ENCODE measurements at regions of chr17 and their contacts with region 1.

Region 1: GRCh38 chr17:45104907-45105574 is 27.3 kb downstream of the PLCD3 start:
- DNase-seq: no peak
- H3K4me3 ChIP-seq: no peak overlapping the region
- H3K27ac ChIP-seq: no peak overlapping the region
- H3K4me1 ChIP-seq: peaks cover 7% of the 10 kb centered on the region
- H3K27me3 ChIP-seq: no peaks in the 10 kb centered on the region
- CTCF ChIP-seq: no peak
- EP300 ChIP-seq: no peak
- POLR2A ChIP-seq: no peak

Region 2: DNA sequence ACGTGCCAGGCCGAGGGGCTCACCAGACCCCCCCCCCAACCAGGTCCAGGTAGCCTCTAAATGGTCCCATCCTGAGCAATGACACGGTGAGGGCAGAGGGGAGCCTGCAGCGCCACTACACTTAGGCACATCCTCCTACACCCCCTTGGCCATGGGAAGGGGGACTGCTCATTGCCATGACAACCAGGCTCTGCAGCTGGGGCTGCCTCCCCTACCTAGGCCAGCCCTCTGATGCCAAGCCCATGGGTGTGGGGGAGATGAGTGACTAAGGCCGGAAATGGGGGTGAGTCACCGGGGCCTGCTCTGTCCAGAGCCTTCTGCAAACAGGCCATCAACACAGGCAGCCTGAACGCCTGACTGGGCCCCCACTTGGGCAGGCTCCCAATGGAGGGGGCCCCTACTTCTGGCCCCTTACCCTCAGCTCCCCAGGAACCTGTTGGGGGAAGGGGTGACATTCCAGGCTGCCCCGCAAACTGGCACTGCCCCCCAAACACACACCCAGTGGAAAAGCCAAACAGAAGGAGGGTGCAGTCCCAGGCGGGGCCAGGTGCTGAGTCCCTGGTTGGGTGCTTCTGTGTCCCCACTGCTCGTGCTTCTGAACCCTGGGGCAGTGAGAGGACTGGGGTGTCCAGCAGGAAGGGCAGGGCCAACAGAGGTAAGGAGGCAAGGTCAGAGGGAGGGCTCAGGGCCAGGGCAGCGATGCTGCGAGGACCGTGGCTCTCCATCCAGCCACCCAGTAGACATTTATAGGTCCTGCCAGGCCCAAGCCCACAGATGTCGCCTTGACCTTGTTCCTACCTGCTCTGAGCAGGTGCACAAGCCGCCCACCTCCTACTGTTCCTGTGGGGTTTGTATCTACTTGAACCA is 19.1 kb after region 1 on chr17:
- intact Hi-C with region 1: loop called in 1 of 4 experiments (anchors 2 kb)
- DNase-seq: peak; percentile 71 to 81 (median 78)
- H3K4me3 ChIP-seq: no peak overlapping the region
- H3K27ac ChIP-seq: peak overlapping the region; percentile 25 to 47
- H3K4me1 ChIP-seq: peaks cover 27% of the 10 kb centered on the region
- H3K27me3 ChIP-seq: no peaks in the 10 kb centered on the region
- CTCF ChIP-seq: no peak
- EP300 ChIP-seq: no peak
- POLR2A ChIP-seq: no peak

Measured in ovary (tissue), 10 donors.